Caco-2 (cell line): ENCODE measurements at regions of chrX and their contacts with region 1.

Region 1: DNA sequence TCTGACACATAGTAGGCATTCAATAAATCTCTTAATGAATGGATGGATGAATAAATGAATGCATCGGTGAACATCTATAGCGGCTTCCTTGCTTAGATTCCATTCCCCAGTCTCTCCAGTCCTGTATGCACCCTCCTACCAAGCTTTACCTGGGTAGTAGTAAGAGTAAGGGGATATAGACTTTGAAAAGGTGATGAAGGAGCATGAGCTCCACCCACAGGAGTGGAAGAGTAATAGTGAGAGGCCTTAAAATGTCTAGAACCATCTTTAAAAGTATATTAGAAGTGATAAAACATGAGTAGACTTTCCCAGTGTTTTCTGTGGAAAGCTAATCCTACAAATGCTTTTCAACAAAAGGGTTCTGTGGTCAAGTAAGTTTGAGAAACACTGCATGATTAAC is 35.5 kb upstream of the GPC3 start:
- DNase-seq: peak; percentile 43 to 50
- H3K4me3 ChIP-seq: no peak overlapping the region
- H3K4me3 Mint-ChIP-seq: no peak overlapping the region
- H3K27ac Mint-ChIP-seq: no peak overlapping the region
- H3K4me1 ChIP-seq: peaks cover 6% of the 10 kb centered on the region; the same call in 1 of the 2 replicates
- H3K4me1 Mint-ChIP-seq: peaks cover 23% of the 10 kb centered on the region
- H3K27me3 ChIP-seq: no peaks in the 10 kb centered on the region
- H3K27me3 Mint-ChIP-seq: no peaks in the 10 kb centered on the region
- CTCF ChIP-seq: peak in 1 of 2 experiments; percentile 47

Region 2: GRCh38 chrX:133513123-133513522 is 507.8 kb before region 1 on chrX:
- CTCF ChIA-PET with region 1: no interaction called
- POLR2A ChIA-PET with region 1: no interaction called
- intact Hi-C with region 1: no loop called
- DNase-seq: no peak
- H3K4me3 ChIP-seq: no peak overlapping the region
- H3K4me3 Mint-ChIP-seq: no peak overlapping the region
- H3K27ac Mint-ChIP-seq: no peak overlapping the region
- H3K4me1 ChIP-seq: no peaks in the 10 kb centered on the region
- H3K4me1 Mint-ChIP-seq: no peaks in the 10 kb centered on the region
- H3K27me3 ChIP-seq: no peaks in the 10 kb centered on the region
- H3K27me3 Mint-ChIP-seq: no peaks in the 10 kb centered on the region
- CTCF ChIP-seq: no peak

Region 3: DNA sequence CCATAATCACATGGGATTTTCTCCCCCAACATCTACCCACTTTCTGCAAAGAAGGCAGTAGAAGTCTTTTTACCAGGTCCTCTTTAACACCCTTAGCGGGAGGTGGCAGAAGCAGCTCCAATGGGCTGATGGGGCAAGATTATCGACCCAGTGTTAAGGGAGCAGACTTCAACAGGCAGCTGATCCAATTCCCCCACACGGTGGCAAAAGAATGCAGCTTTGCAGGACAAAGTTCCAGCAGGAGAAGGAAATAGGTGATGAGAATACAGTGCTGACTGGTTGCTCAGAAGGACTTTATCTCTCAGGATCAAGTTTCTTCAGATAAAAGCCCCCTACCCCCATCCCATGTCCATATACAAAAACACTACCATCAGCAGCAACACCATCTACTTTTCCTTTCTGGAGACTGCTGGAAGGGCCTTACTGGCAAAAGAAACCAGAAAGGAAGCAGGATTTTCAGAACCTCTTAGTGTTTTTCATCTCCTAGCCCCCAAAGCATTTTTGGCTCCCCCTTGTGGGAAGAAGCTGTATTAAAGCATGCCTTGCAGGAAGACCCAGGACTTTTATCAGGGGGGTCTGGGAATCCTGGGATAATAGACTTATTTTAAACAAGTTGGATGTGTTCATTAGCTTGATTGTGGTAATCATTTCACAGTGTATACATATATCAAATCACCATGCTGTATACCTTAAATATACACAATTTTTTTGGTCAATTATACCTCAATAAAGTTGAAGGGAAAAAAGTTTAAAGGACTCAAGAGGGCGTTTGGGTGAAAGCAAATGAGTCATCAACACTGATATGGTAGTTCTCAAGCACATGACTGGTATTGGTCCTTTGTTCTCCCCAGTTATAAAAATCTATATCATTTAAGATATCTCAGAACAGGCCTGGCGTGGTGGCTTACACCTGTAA is 181.9 kb before region 1 on chrX:
- CTCF ChIA-PET with region 1: interaction called, 9 read pairs
- POLR2A ChIA-PET with region 1: no interaction called
- intact Hi-C with region 1: loop called (anchors 1 kb)
- DNase-seq: peak; percentile 48 to 63
- H3K4me3 ChIP-seq: no peak overlapping the region
- H3K4me3 Mint-ChIP-seq: no peak overlapping the region
- H3K27ac Mint-ChIP-seq: no peak overlapping the region
- H3K4me1 ChIP-seq: no peaks in the 10 kb centered on the region
- H3K4me1 Mint-ChIP-seq: no peaks in the 10 kb centered on the region
- H3K27me3 ChIP-seq: no peaks in the 10 kb centered on the region
- H3K27me3 Mint-ChIP-seq: no peaks in the 10 kb centered on the region
- CTCF ChIP-seq: peak; percentile 41 to 50

Region 4: DNA sequence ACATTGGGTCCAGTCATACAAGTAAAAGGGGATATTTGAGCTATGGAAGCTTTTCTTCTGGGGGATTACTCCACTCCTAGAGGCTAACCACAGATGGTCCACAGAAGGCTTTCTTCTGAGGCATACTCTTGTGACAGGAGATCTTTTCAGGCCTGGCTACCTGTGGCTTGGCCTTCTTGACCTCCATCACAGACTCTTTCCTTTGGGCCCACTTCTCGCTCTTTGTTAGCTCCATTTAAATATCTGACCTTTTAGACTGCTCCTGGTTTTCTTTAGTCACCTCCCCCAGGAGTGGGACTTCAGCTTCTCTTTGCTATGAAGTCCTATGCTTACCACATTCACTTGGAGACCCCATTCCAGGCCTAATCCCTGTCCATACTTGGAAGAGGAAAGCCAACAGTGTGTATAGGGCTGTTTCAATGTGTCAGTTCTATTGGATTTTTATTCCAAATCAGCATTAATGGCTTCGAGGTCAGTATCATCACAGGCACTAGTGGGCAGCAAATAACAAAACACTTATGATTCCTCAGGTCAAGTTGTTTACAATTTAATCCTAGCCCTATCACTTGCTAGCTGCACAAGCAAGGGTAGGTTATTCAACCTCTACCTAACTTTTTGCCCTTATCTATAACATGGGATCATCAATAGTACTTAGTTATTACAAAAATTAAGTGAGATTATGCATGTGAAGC is 61.8 kb before region 1 on chrX:
- CTCF ChIA-PET with region 1: interaction called, 10 read pairs
- POLR2A ChIA-PET with region 1: no interaction called
- intact Hi-C with region 1: loop called (anchors 1 kb)
- DNase-seq: no peak
- H3K4me3 ChIP-seq: no peak overlapping the region
- H3K4me3 Mint-ChIP-seq: no peak overlapping the region
- H3K27ac Mint-ChIP-seq: no peak overlapping the region
- H3K4me1 ChIP-seq: no peaks in the 10 kb centered on the region
- H3K4me1 Mint-ChIP-seq: peaks cover 9% of the 10 kb centered on the region
- H3K27me3 ChIP-seq: no peaks in the 10 kb centered on the region
- H3K27me3 Mint-ChIP-seq: no peaks in the 10 kb centered on the region
- CTCF ChIP-seq: no peak

Region 5: DNA sequence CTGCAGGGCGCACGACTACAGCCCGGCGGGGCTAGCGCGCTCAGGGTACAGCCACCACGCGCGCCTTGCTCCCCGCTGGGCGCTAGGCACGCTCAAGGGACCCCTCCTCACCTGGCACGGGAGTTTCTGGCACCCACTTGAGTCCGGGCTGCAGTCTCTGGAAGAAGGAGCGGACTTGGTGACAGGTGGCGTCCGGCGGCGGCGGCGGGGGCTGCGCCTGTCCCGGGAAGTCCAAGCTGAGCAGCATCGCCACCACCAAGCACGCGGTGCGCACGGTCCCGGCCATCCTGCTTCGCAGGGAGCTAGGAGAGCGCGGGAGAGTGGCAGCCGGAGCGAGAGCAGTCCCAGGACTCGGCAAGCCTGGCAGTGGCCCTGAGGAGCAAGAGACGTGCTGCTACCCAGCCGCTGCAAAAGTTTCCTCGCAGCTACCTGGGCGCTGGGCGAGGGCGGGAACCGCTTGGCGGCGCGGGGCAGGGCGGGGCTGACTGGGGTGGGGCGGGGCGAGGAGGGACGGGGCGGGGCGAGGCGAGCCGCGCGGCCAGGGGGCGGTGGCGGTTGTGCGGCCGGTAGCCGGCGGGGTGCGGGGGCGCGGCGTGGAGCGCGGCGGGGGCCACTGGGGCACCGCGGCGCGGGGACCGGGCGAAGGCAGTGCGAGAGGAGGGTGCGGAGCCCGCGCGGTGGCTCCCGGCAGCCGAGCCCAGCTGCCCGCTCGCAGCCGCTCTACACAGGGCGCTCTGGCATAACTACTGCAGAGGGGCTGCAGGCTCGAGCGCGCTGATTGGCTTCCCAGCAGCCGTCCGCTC is 35.5 kb before region 1 on chrX and contains the start of gene GPC3:
- CTCF ChIA-PET with region 1: interaction called, 9 read pairs
- POLR2A ChIA-PET with region 1: interaction called, 3 read pairs
- intact Hi-C with region 1: loop called (anchors 5 kb)
- DNase-seq: peak; percentile 74 to 75
- H3K4me3 ChIP-seq: peak within 1 kb of the TSS; percentile 80
- H3K4me3 Mint-ChIP-seq: peak within 1 kb of the TSS; percentile 73
- H3K27ac Mint-ChIP-seq: peak within 1 kb of the TSS; percentile 29
- H3K4me1 ChIP-seq: peaks cover 16% of the 10 kb centered on the region
- H3K4me1 Mint-ChIP-seq: peaks cover 21% of the 10 kb centered on the region
- H3K27me3 ChIP-seq: no peaks in the 10 kb centered on the region
- H3K27me3 Mint-ChIP-seq: no peaks in the 10 kb centered on the region
- CTCF ChIP-seq: no peak
- total RNA-seq, gene GPC3: 233 and 266 TPM in 2 replicates